Mammary epithelial cell (primary cell): ENCODE measurements at regions of chr5 and their contacts with region 1.

Region 1: DNA sequence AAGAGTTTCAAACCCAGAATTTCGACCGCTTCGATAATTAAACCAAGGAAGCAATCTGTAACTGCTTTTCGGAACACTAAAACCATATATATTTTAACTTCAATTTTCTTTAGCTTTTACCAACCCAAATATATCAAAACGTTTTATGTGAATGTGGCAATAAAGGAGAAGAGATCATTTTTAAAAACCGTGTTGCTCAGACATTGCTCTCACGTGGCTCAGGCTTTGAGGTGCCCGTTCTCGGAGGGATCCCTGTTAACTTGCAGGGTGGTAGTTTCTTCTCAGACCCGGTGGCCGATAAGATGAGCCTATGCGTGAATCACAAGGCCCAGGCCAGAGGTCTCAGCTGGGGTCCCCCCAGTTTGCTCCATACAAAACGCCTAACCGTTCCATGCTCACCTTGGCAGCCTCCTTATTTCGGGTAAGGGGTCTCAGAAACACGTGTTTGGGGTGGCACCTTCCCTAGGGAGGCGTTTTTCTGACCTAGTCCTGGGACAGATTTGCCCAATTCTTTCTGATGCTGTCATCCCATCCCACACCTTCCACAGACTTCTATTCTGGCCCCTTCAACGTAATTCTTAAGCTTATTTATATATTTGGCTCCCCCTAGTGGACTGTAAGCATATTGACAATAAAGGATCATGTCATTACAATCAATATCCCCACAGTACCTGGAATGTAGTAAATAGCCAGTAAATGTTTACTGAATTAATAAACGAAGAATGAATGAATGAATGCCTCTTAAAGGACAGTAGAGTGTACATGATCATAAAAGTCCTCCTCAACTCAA is 48.1 kb downstream of the THBS4 start:
- DNase-seq: peak; percentile 52
- H3K4me3 ChIP-seq: peak overlapping the region in 2 of 3 experiments; percentile 1 to 14
- H3K27ac ChIP-seq: no peak overlapping the region
- H3K4me1 ChIP-seq: no peaks in the 10 kb centered on the region
- H3K27me3 ChIP-seq: no peaks in the 10 kb centered on the region
- CTCF ChIP-seq: peak; percentile 61 to 64

Region 2: DNA sequence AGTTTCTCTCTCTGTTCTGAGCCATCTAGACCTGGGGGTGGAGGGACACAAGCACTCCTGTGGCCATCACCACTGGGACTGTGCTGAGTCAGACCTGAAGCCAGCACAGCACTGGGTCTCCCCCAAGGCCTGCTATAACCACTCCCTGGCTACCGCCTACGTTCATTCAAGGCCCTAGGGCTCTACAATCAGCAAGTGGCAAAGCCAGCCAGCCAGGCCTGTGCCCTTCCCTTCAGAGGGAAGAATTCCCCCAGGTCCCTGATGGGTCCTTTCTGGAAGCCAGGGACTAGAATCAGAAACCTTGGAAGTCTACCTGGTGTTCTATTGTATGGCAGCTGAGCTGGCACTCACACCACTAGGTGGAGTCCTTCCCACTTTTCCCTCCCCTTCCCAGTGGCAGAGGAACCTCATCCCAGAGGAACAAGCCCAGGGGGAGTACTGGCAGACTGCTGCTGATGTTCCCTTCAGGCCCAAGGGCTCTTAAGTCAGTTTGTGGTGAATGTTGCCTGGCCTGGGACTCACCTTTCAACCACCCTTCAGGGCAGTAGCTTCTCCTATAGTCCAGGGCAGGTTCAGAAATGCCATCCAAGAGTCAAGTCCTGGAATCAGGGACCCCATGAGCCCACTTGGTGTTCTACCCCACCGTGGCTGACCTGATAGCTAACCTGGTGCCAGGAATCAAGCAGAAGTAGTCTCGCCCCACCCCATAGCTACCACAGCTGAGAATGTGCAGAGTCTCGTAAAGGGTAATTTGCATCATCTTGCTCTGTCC is 827.3 kb before region 1 on chr5:
- CTCF ChIA-PET with region 1: no interaction called
- dilution Hi-C with region 1: no loop called
- in situ Hi-C with region 1: no loop called
- intact Hi-C with region 1: loop called (anchors 5 kb)
- DNase-seq: peak; percentile 36
- H3K4me3 ChIP-seq: no peak overlapping the region
- H3K27ac ChIP-seq: no peak overlapping the region
- H3K4me1 ChIP-seq: peaks cover 16% of the 10 kb centered on the region
- H3K27me3 ChIP-seq: no peaks in the 10 kb centered on the region
- CTCF ChIP-seq: peak; percentile 47 to 78

Region 3: GRCh38 chr5:79702606-79703382 is 380.5 kb before region 1 on chr5:
- CTCF ChIA-PET with region 1: no interaction called
- dilution Hi-C with region 1: no loop called
- in situ Hi-C with region 1: no loop called
- intact Hi-C with region 1: loop called (anchors 1 kb)
- DNase-seq: peak; percentile 56
- H3K4me3 ChIP-seq: no peak overlapping the region
- H3K27ac ChIP-seq: no peak overlapping the region
- H3K4me1 ChIP-seq: peaks cover 10% of the 10 kb centered on the region
- H3K27me3 ChIP-seq: no peaks in the 10 kb centered on the region
- CTCF ChIP-seq: peak; percentile 57 to 60

Region 4: DNA sequence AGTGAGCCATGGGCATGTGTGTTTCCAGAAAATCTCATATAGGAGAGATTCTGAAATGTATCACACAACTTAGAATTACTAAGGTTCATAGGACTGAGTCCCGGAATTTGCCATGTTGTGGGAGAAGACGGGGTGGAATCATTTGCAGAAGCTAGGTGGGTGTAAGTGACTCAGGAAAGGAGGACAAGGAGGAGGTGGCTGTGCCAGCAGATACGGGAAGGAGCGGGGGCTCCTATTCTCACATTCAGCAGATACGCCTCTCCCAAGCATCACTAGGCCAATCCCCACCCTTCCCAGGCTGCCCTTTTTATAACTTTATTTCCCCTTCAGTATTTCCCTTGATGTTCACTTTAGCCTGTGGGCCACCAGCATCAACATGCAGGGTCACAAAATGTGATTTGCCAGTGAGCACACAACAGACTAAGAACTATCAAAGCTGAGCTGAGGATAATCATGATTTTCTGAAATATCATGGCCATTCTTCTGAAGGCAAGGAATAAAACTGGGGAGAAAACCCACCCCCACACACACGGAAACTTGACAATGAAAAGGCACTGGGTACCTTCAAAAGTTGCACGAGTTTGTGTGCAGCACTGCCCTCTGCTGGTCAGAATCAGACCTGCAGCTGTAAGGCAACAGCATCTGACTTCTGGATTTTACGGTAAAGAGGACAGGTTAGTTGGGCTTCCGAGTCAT is 225.4 kb before region 1 on chr5:
- CTCF ChIA-PET with region 1: no interaction called
- dilution Hi-C with region 1: no loop called
- in situ Hi-C with region 1: loop called in 1 of 2 experiments (anchors 25 kb)
- intact Hi-C with region 1: loop called (anchors 1 kb)
- DNase-seq: peak; percentile 45
- H3K4me3 ChIP-seq: no peak overlapping the region
- H3K27ac ChIP-seq: no peak overlapping the region
- H3K4me1 ChIP-seq: peaks cover 7% of the 10 kb centered on the region
- H3K27me3 ChIP-seq: peaks cover 3% of the 10 kb centered on the region
- CTCF ChIP-seq: peak; percentile 93 to 97

Region 5: GRCh38 chr5:79878721-79879336 is 204.5 kb before region 1 on chr5:
- CTCF ChIA-PET with region 1: interaction called, 3 read pairs
- dilution Hi-C with region 1: no loop called
- in situ Hi-C with region 1: loop called in 1 of 2 experiments (anchors 25 kb)
- intact Hi-C with region 1: loop called (anchors 1 kb)
- DNase-seq: peak; percentile 3
- H3K4me3 ChIP-seq: no peak overlapping the region
- H3K27ac ChIP-seq: no peak overlapping the region
- H3K4me1 ChIP-seq: no peaks in the 10 kb centered on the region
- H3K27me3 ChIP-seq: no peaks in the 10 kb centered on the region
- CTCF ChIP-seq: peak; percentile 49 to 57

Region 6: GRCh38 chr5:79924936-79925893 is 158.1 kb before region 1 on chr5:
- CTCF ChIA-PET with region 1: interaction called, 4 read pairs
- dilution Hi-C with region 1: no loop called
- in situ Hi-C with region 1: loop called (anchors 5 kb)
- intact Hi-C with region 1: loop called (anchors 1 kb)
- DNase-seq: no peak
- H3K4me3 ChIP-seq: no peak overlapping the region
- H3K27ac ChIP-seq: no peak overlapping the region
- H3K4me1 ChIP-seq: no peaks in the 10 kb centered on the region
- H3K27me3 ChIP-seq: peaks cover 4% of the 10 kb centered on the region
- CTCF ChIP-seq: peak; percentile 38 to 81

Region 7: GRCh38 chr5:79990598-79991507 is 92.4 kb before region 1 on chr5 and contains the start of gene MTX3:
- CTCF ChIA-PET with region 1: no interaction called
- dilution Hi-C with region 1: no loop called
- in situ Hi-C with region 1: no loop called
- intact Hi-C with region 1: loop called (anchors 2 kb)
- DNase-seq: peak; percentile 79
- H3K4me3 ChIP-seq: peak within 1 kb of the TSS; percentile 63 to 77 (median 77)
- H3K27ac ChIP-seq: peak within 1 kb of the TSS; percentile 59
- H3K4me1 ChIP-seq: peaks cover 3% of the 10 kb centered on the region
- H3K27me3 ChIP-seq: no peaks in the 10 kb centered on the region
- CTCF ChIP-seq: no peak
- total RNA-seq, gene MTX3: 21.7 to 23.0 TPM